Activated CD4-positive, alpha-beta T cell treated with anti-CD3 and anti-CD28 coated beads, Interleukin-2, amount 10 ng/mL, durations not matched to agents 24 days and 14 days (primary cell): ENCODE measurements at regions of chr4 and their contacts with region 1.

Region 1: GRCh38 chr4:153221783-153222706 is 17.8 kb downstream of the TRIM2 start:
- DNase-seq: peak; percentile 70
- H3K4me3 Mint-ChIP-seq: peak overlapping the region; percentile 83
- H3K27ac Mint-ChIP-seq: no peak overlapping the region
- H3K4me1 Mint-ChIP-seq: peaks cover 16% of the 10 kb centered on the region
- H3K27me3 Mint-ChIP-seq: peaks cover 52% of the 10 kb centered on the region

Region 2: GRCh38 chr4:153207567-153207966 is 14.5 kb before region 1 on chr4:
- intact Hi-C with region 1: no loop called
- DNase-seq: no peak
- H3K4me3 Mint-ChIP-seq: no peak overlapping the region
- H3K27ac Mint-ChIP-seq: no peak overlapping the region
- H3K4me1 Mint-ChIP-seq: peaks cover 20% of the 10 kb centered on the region
- H3K27me3 Mint-ChIP-seq: peaks cover 4% of the 10 kb centered on the region

Region 3: GRCh38 chr4:153249199-153250041 is 27.4 kb after region 1 on chr4:
- intact Hi-C with region 1: loop called (anchors 2 kb)
- DNase-seq: peak; percentile 95
- H3K4me3 Mint-ChIP-seq: peak overlapping the region; percentile 89
- H3K27ac Mint-ChIP-seq: peak overlapping the region; percentile 83
- H3K4me1 Mint-ChIP-seq: peaks cover 9% of the 10 kb centered on the region
- H3K27me3 Mint-ChIP-seq: peaks cover 2% of the 10 kb centered on the region

Region 4: DNA sequence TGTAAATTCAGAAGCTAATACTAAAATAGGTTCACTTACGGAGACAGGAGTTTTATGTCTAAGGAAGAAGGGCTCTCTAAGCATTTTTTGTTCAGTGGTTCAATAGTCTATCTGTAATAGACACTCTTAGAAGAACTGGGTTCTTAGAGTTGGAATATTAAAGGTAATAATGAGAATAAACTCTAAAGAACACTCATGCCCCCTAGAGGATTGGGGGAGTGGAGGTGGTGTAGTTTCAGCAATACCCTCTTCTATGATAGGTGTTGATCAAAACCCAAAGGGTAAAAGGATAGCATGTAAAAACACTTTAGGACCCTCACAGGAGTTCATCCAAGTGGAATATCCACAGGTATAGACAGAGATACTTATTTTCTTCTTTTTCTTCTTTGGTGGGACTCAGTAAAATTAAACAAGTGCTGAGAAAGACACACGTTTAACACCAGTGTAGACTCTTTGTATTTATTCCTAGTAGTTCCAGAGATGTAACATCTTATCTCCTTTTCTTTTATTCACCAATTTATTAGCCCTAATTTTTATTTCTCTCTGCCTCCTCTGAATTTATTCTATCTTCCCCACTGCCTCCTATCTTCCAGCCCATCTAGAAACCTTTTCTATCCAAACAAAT is 96.8 kb after region 1 on chr4:
- intact Hi-C with region 1: loop called (anchors 10 kb)
- DNase-seq: peak; percentile 62
- H3K4me3 Mint-ChIP-seq: no peak overlapping the region
- H3K27ac Mint-ChIP-seq: no peak overlapping the region
- H3K4me1 Mint-ChIP-seq: no peaks in the 10 kb centered on the region
- H3K27me3 Mint-ChIP-seq: peaks cover 5% of the 10 kb centered on the region